Activated T-helper 2 cell treated with anti-CD3 and anti-CD28 coated beads, Interferon-gamma antibody, Interleukin-2, Interleukin-4, amounts not matched to agents 10 μg/mL and 5 μg/mL and 100 μg/mL, durations not matched to agents 14 hours and 24 hours and 36 hours (primary cell): ENCODE measurements at regions of chr1 and their contacts with region 1.

Region 1: DNA sequence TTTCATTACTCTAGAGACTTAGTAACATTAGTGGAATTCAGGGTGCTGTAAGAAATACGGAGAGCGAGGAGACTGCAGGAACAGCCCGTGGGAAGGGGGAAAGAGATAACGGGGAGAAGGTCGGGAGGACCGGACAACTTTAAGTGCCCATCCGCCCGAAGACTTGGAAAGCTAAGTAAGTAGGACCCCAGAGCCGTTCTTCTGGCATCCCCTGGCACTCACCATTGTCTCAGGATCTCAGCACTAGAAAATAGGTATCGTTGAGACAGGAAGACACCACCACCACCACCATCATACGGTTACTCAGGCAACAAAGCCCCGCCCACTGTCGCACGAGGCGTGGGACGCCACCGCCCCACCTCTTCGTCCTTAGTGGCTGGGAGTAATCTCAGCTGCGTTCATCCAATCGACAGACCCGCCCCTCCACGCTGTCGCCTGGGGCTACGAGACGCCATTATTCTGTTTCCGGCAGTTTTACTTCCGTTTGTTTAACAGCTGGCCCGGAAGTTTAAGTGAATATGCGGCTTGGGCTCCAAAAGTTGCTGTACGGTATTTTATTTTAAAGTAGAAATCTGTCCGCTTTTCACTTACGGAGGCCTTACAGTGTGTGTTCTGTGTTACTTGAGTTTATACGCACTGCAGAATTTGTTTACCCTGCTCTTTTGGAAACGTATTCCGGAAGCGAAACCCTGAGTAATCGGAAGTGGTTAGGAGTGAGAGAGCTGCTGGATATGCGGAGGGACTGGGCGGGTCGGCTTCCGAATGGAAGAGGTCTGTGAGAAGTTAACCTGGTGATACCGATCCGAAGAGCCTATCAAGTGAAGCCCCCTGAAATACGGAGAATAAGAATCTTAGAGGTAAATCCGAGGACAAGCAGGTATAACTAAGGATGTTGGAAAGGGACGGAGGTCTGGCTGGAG is at the starts of genes BLZF1 and NME7:
- DNase-seq: peak; percentile 98
- H3K4me3 Mint-ChIP-seq: peak within 1 kb of the TSS; percentile 67
- H3K27ac Mint-ChIP-seq: peak within 1 kb of the TSS; percentile 21
- H3K4me1 Mint-ChIP-seq: peaks cover 35% of the 10 kb centered on the region
- H3K27me3 Mint-ChIP-seq: no peaks in the 10 kb centered on the region
- total RNA-seq, gene BLZF1: 11.8 and 11.9 TPM in 2 replicates
- total RNA-seq, gene NME7: 14.1 and 23.4 TPM in 2 replicates

Region 2: GRCh38 chr1:168439456-168440375 is 928.0 kb before region 1 on chr1:
- intact Hi-C with region 1: loop called (anchors 5 kb)
- DNase-seq: peak; percentile 79
- H3K4me3 Mint-ChIP-seq: peak overlapping the region; percentile 58
- H3K27ac Mint-ChIP-seq: peak overlapping the region; percentile 65
- H3K4me1 Mint-ChIP-seq: peaks cover 57% of the 10 kb centered on the region
- H3K27me3 Mint-ChIP-seq: no peaks in the 10 kb centered on the region

Region 3: DNA sequence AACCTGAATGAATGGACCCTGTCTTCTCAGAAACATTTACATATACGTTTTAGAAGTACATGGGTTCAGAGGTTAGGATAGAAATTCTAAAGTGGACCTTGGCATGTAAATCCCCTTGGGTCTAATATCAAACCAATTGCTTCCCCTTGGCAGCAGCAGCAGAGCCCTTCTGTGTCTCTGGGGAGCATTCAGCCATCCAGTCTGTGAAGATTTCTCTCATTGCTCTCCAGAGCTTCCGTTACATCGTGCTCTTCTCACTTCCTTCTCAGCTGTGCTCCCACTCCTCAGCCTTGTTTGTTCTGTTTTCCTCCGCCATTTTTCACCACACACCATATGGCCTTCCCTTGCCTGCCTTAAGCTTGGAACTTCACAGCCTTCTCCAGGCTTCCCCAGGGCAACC is 322.8 kb before region 1 on chr1:
- intact Hi-C with region 1: loop called (anchors 5 kb)
- DNase-seq: no peak
- H3K4me3 Mint-ChIP-seq: peak overlapping the region; percentile 5
- H3K27ac Mint-ChIP-seq: peak overlapping the region; percentile 58
- H3K4me1 Mint-ChIP-seq: peaks cover 69% of the 10 kb centered on the region
- H3K27me3 Mint-ChIP-seq: no peaks in the 10 kb centered on the region

Region 4: GRCh38 chr1:169312084-169312954 is 55.4 kb before region 1 on chr1:
- intact Hi-C with region 1: loop called (anchors 1 kb)
- DNase-seq: peak; percentile 69
- H3K4me3 Mint-ChIP-seq: no peak overlapping the region
- H3K27ac Mint-ChIP-seq: peak overlapping the region; percentile 70
- H3K4me1 Mint-ChIP-seq: peaks cover 31% of the 10 kb centered on the region
- H3K27me3 Mint-ChIP-seq: no peaks in the 10 kb centered on the region

Region 5: DNA sequence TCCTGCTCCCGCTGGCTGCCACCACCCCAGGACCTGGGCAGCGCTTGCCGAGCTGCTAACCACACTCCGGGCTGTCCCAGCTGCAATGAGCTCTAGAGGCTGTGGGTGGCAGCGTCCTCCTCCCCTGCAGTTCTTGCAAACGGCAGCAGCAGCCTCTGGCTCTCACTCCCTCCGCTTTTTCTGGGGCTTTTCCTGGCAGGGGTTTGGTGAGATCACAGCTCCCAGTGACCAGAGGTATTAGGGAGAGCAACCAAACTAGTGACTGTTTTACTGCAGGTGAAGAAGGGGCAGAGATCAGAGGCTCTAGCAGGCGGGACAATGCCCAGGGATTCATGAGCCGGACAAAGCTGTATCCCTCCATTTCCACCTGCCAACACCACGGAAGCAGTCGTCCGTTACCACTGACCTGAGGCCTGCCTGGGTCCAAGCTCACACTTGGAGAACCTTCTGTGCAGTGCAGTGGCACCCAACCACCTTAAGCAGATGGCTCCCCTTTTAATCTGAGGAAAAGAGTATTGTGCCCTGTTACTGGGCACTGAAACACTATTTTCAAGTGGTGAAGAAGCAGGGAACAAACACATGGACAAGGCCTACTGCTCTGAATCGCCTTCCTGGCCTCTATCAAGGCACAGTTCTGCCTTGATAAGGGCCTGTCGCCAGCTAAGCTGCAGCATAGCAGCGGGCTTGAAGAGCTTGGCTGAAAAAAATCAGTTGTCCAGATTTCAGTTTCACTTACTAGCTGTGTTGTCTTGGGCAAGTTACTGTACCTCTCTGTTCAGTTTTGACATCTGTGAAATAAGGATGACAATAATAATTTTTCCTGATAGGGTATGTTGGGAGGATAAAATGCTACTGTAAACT is 218.9 kb after region 1 on chr1 and contains the start of gene F5:
- intact Hi-C with region 1: loop called (anchors 5 kb)
- DNase-seq: peak; percentile 69
- H3K4me3 Mint-ChIP-seq: peak within 1 kb of the TSS; percentile 89
- H3K27ac Mint-ChIP-seq: peak within 1 kb of the TSS; percentile 83
- H3K4me1 Mint-ChIP-seq: peaks cover 59% of the 10 kb centered on the region
- H3K27me3 Mint-ChIP-seq: no peaks in the 10 kb centered on the region
- total RNA-seq, gene F5: 25.0 and 26.0 TPM in 2 replicates

Region 6: DNA sequence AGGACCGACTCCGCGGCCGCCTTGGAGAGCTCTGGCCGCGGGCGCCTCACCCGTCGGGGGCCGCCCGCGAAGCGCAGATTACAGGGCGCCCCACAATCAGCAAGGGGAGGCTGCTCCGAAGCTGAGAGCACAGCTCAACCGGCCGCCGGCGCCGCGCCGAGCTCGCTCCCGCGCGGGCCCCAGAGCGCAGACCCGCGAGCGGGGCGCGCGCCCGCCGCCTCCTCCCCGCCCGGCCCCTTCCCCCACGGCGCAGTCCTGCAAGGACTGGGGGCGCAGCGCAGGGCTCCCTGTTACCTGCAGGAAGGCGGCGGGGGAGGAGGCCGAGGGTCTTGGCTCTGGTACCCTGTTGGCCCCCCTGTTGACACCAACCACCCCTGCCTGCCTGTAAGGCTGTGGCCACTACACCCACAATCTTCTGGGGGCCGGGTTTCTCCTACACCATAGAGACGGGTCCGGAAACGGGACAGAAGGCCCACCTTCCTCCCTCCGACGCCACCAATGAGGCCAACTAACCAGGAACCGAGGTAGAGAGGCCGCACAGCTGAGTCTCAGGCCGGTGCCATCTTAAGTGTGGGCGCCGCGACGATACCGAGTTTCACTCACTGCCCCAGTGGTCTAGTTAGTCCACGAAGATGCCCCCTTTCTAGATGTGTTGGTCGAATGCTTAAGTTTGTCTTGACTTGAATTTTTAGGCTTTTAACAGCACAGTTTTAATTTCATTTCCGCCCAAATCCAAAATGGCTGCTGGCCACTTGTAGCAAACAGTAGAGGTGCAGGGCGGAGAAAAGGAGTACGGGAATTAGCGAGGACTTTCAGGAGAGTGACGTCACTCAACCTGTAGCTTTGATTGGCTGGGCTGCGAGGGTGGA is 526.0 kb after region 1 on chr1 and contains the start of gene SCYL3:
- intact Hi-C with region 1: loop called (anchors 5 kb)
- DNase-seq: peak; percentile 89
- H3K4me3 Mint-ChIP-seq: peak within 1 kb of the TSS; percentile 86
- H3K27ac Mint-ChIP-seq: peak within 1 kb of the TSS; percentile 98
- H3K4me1 Mint-ChIP-seq: peaks cover 48% of the 10 kb centered on the region
- H3K27me3 Mint-ChIP-seq: peaks cover 8% of the 10 kb centered on the region
- total RNA-seq, gene SCYL3: 9.5 and 10.2 TPM in 2 replicates